ENCODE measurements at regions of chr1 and their contacts with region 1.

Region 1: GRCh38 chr1:200674838-200675587 is 5.3 kb upstream of the DDX59 start:
- DNase-seq: no peak
- CTCF ChIP-seq: no peak

Region 2: DNA sequence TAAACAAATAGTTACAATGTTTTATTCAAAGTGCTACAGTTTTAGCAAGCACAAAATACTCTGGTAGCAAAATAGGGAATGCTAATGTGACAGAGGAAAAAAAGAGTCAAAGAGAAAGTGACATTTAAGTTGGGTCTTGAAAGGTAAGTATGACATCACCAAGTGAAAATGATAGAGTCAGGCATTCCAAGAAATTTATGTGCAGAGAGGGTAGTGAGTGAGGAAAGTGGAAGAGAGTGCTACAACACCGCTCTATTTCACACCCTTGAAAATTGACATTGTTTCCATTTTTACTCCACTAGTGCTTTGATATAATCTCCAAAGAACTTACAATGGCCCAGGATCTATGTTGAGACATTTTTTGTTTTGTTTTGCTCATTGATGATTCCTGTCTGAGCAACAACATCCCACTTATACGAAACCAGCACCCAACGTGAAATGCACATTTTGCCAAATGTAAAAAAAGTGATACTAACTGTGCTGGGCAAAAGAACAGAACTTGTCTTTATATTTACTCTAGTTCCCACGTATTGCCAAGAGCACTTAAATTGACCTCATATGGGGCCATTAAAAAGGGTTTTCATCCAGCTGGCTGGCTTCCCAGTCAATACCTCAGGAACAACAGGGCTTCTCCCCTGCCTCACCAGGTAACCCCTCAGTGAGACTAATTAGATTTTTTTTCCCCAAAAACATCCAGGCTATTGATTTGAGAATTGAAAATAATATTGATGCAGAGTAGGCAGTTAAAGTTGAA is 853.8 kb before region 1 on chr1:
- in situ Hi-C with region 1: no loop called
- DNase-seq: no peak
- CTCF ChIP-seq: no peak

Region 3: DNA sequence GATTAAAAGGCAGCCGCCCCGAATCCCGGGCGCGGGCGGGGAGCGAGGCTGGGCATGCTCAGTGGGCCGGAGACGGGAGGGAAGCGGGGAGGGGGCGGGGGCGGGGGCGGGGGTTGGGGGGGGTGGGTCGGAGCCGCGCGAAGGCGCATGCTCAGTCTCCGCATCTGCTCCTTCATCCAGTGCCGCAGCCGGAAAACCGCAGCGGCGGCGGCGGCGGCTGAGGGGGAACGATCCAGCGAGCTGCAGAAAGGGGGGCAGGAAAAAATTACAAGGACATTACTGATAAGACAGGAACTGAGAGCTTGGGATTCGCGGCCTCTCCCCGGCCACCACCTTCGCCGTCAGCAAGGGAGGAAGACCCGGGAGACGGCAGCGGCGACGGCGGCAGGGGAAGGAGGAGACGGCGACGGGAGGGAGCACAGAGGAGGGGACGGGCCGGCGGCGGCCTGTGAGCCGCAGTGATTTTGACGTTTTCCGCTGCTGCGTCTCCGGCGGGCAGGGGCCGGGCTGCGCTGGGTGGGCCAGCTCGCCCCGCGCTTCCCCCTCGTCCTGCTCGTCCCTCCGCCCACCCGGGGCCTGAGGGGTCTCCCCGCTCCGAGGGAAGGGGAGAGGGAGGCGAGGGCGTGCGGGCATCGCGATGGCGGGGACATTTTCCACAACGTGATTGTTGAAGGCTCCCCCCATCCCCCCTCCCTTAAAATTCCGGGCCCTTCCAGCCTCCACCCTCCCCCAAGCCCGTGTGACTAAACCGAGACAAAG is 63.9 kb after region 1 on chr1 and contains the start of gene CAMSAP2:
- in situ Hi-C with region 1: loop called (anchors 5 kb)
- DNase-seq: peak; percentile 83
- CTCF ChIP-seq: no peak

Region 4: GRCh38 chr1:201072158-201072557 is 397.1 kb after region 1 on chr1:
- in situ Hi-C with region 1: no loop called
- DNase-seq: no peak
- CTCF ChIP-seq: no peak

Measured in GM13976 (cell line).